MCF 10A (cell line): ENCODE measurements at regions of chr20 and their contacts with region 1.

Region 1: DNA sequence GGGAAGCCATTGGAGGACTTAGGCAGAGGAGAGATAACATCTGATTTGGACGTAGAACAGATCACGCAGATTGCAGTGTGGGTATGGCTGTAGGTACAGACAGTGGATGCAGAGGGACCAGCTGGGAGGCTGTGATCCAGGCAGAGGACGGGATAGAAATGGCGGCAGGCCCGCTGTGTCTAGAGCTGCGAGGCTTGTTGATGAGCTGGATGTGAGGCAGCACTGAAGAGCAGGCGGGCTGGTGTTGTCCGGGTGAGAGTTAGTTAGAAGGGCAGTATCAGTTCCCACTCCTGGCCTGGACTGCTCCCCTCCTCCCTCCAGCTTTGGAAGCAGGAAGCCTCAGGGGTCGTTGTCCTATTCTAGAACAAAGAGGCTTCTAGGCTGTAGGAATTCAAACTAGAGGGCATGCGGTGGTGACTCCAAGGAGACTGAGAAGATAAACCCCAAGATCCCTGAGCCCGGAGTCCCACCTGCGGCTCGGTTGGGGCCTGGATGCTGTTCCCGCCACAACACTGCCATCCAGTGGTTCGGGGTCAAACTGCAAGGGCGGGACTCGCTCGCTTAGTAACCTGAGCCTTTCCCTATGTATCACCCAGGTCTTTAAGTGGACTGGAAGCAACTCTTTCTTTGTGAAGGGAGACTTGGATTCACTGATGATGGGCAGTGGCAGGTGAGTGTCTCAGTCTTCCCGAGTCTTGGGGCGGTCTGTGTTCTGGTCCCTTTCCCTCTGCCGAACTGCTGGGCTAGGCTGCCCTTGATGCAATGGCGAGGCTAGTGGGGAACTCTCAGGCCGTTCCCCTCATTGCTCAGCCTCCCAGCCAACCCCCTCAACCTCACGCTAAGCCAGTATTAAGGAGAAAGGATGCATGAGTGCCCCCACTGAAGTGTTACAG is 11.2 kb downstream of the TLDC2 start:
- DNase-seq: peak; percentile 82
- H3K4me3 Mint-ChIP-seq: no peak overlapping the region
- H3K27ac Mint-ChIP-seq: no peak overlapping the region
- H3K4me1 Mint-ChIP-seq: peaks cover 7% of the 10 kb centered on the region
- H3K27me3 Mint-ChIP-seq: no peaks in the 10 kb centered on the region
- CTCF ChIP-seq: peak; percentile 98

Region 2: DNA sequence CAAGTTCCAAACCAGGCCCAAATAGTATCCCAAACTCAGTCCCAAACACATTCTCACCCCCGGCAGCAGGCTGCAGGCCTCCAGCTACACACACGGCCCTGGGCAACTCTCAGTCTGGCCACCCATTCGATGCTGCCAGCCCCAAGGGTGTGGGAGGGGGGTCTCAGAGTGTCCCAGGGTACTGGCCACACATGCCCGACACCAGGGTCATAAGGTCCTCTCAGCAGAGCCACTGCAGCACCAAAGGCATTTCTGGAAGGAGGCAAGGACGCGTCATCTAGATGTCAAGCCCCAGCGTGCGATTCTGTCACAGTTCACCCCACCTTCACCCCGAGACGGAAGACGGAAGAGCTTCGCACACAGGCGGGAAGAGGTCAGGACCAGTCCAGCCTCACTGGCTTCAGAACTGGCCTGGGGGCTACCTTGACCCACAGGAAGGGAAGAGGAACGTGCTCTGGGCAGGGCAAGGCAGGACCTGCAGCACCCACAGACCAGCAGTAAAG is 336.3 kb before region 1 on chr20:
- CTCF ChIA-PET with region 1: no interaction called
- POLR2A ChIA-PET with region 1: no interaction called
- intact Hi-C with region 1: loop called (anchors 5 kb)
- DNase-seq: no peak
- H3K4me3 Mint-ChIP-seq: no peak overlapping the region
- H3K27ac Mint-ChIP-seq: no peak overlapping the region
- H3K4me1 Mint-ChIP-seq: no peaks in the 10 kb centered on the region
- H3K27me3 Mint-ChIP-seq: no peaks in the 10 kb centered on the region
- CTCF ChIP-seq: no peak

Region 3: DNA sequence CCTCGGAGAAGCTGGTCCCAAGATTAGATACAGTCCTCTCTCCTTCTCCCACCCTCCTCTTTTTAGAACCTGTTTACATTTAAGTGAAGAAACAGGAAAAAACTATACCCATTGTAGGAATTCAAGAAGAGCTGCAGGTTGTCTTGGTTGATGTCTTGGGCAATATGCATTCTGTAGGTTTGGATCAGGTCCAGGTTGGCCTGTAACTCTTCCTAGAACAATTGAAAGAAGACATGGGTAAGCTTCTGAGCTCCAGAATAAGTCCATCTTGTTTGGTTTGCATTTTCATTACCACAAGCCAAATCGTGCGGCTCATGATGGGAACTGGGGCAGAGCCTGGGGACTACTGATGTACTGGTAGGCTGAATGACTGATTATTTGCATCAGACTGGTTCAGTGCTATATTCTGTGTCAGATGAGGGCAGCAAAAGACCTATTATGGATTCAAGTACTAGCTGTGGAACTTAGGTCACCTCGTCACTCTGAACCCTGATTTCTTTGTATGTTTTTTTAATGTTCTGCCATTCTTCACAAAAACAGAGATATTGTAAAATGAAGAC is 220.8 kb before region 1 on chr20:
- CTCF ChIA-PET with region 1: interaction called, 11 read pairs
- POLR2A ChIA-PET with region 1: no interaction called
- intact Hi-C with region 1: loop called (anchors 1 kb)
- DNase-seq: peak; percentile 58
- H3K4me3 Mint-ChIP-seq: no peak overlapping the region
- H3K27ac Mint-ChIP-seq: no peak overlapping the region
- H3K4me1 Mint-ChIP-seq: peaks cover 5% of the 10 kb centered on the region
- H3K27me3 Mint-ChIP-seq: no peaks in the 10 kb centered on the region
- CTCF ChIP-seq: peak; percentile 14

Region 4: DNA sequence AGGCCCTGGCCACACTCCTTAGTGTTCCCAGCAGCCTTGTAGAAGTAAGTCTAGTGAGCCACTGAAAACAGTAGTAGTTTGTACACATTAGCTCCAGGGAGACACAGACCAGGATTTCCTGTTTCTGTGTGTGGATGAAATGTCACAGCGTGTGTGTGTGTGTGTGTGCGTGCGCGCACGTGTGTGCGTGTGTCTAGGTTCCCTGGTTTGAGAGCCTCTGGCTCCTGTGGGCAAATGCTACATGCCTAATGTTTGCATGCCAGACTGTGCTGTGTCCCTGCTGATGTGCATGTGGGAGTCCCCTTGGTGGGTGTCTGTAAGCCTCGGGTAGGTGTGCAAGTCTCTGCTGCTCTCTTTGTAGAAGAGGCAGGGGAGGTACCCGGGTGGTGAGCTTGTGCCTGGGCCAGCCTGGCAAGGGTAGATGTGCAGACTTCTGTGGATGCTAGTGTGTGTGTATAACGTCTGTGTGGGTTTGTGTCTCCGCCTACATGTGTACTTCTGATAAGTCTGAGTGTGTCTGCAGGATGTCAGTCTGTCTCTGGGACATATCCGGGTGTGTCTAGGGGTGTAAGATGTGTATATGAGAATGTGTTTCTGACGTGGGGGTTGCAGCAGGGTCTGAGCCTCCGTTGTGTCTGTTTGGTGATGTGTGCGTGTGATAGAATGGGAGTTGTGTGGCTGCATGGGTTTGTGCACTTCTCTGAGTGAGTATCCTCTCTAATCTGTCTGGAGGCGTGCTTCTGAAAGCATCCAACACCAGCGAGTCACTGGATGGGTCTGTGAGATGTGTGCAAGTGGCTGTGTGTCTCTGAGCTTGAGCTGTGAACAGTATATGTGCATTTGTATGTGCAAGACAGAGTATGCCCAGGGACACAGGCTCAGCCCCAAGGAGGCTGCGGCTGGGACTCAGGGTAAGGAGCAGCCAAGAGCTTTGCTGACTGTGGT is 30.1 kb before region 1 on chr20:
- CTCF ChIA-PET with region 1: interaction called, 14 read pairs
- POLR2A ChIA-PET with region 1: interaction called, 6 read pairs
- intact Hi-C with region 1: no loop called
- DNase-seq: no peak
- H3K4me3 Mint-ChIP-seq: no peak overlapping the region
- H3K27ac Mint-ChIP-seq: peak overlapping the region; percentile 2
- H3K4me1 Mint-ChIP-seq: peaks cover 68% of the 10 kb centered on the region
- H3K27me3 Mint-ChIP-seq: no peaks in the 10 kb centered on the region
- CTCF ChIP-seq: no peak

Region 5: DNA sequence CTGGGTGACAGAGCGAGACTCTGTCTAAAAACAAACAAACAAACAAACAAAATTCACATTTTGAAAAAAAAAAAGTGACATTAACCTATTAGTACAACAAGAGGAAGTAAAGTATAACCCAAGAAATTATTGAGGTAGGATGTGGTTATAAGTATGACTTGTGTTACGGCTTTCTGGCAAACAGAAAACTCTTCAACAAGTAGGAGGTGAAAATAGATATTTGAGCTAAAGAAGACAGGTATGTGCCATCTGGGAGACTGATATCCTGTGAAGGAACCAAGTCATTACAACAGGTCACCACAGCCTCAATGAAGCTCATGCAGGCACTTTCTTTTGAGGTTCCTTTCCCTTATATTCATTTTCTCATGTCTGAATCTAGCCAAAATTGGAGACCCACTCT is 17.6 kb after region 1 on chr20:
- CTCF ChIA-PET with region 1: interaction called, 11 read pairs
- POLR2A ChIA-PET with region 1: no interaction called
- intact Hi-C with region 1: no loop called
- DNase-seq: no peak
- H3K4me3 Mint-ChIP-seq: no peak overlapping the region
- H3K27ac Mint-ChIP-seq: no peak overlapping the region
- H3K4me1 Mint-ChIP-seq: no peaks in the 10 kb centered on the region
- H3K27me3 Mint-ChIP-seq: no peaks in the 10 kb centered on the region
- CTCF ChIP-seq: no peak

Region 6: DNA sequence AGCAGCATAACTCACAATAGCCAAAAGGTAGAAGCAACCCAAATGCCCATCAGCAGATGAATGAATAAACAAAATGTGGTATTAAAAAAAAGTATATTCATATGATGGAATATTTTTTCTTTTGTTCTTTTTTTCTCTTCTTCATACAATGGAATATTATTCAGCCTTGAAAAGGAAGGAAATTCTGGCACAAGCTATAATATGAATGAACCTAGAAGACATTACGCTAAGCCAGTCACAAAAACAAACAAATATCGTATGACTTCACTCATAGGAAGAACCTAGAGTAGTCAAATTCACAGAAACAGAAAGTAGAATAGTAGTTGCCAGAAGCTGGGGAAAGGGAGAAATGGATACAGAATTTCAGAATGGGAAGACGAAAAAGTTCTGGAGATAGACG is 145.0 kb after region 1 on chr20:
- CTCF ChIA-PET with region 1: no interaction called
- POLR2A ChIA-PET with region 1: no interaction called
- intact Hi-C with region 1: no loop called
- DNase-seq: no peak
- H3K4me3 Mint-ChIP-seq: no peak overlapping the region
- H3K27ac Mint-ChIP-seq: no peak overlapping the region
- H3K4me1 Mint-ChIP-seq: no peaks in the 10 kb centered on the region
- H3K27me3 Mint-ChIP-seq: no peaks in the 10 kb centered on the region
- CTCF ChIP-seq: no peak

Region 7: DNA sequence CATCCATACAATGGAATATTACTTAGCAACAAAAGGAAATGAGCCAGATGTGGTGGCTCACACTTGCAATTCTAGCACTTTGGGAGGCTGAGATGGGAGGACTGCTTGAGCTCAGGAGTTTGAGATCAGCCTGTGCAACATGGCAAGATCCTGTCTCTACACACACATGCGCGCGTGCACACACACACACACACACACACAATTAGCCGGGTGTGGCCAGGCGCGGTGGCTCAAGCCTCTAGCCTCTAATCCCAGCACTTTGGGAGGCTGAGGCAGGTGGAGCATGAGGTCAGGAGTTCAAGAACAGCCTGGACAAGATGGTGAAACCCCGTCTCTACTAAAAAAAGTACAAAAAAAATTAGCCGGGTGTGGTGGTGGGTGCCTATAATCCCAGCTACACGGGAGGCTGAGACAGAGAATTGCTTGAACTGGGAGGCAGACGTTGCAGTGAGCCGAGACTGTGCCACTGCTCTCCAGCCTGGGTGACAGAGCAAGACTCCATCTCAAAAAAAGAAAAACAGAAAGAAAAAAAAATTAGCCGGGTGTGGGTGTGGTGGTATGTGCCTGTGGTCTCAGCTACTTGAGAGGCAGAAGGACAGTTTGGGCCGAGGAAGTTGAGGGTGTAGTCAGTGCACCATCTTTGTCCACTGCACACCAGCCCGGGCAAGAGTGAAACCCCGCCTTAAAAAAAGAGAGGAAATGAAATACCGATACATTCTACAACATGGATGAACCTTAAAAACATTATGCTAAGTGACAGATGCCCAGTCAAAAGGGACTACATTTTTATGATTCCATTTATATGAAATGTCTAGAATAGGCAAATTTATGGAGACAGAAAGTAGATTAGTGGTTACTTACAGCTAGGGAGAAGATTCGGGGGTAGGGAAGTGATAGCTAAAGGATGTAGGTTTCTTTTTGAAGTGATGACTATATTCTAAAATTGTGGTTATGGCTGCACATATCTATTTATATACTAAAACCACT is 156.2 kb after region 1 on chr20:
- CTCF ChIA-PET with region 1: no interaction called
- POLR2A ChIA-PET with region 1: no interaction called
- intact Hi-C with region 1: no loop called
- DNase-seq: no peak
- H3K4me3 Mint-ChIP-seq: no peak overlapping the region
- H3K27ac Mint-ChIP-seq: no peak overlapping the region
- H3K4me1 Mint-ChIP-seq: no peaks in the 10 kb centered on the region
- H3K27me3 Mint-ChIP-seq: no peaks in the 10 kb centered on the region
- CTCF ChIP-seq: no peak